Activated CD4-positive, alpha-beta T cell treated with anti-CD3 and anti-CD28 coated beads for 36 hours (primary cell): ENCODE measurements at regions of chr6 and their contacts with region 1.

Region 1: DNA sequence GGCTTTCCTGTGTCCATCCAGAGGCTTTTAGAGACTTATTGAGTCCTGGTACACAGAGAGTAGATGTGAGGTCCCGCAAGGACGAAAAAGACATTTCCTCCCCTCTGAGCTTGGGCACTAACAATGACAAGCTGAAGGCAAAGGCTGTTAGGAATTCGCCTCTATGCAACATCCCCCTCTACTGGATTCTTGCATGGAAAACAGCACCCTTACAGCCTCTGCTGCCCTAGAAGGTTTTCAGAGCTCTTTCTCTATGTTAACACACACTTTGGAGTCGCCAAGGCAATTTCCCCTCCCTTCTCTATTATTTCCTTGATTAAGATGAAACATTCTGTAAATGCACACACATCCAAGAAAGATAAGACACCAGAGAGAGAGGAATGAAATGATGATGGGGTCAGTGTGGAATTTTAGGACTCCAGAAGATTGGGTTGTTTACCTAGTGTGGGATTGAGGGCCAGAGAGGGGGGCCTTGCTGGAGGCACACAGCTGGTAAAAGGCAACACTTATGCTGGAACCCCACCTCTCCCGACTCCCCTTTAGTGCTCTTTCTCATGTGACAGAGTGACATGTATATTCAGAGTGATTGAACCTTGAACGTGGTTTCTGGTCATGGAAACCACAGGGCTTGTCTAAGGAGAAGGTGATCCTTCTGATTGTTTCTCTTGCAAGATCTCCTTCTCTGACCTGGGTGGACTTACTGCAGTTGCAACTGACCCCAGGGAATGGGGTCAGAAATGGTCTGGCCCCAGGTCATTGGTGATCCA is 300.7 kb downstream of the CLIC5 start:
- DNase-seq: peak; percentile 57
- ATAC-seq: peak; percentile 43
- H3K4me3 Mint-ChIP-seq: peak overlapping the region; percentile 24
- H3K27ac Mint-ChIP-seq: peak overlapping the region; percentile 89
- H3K4me1 Mint-ChIP-seq: peaks cover 48% of the 10 kb centered on the region
- H3K27me3 Mint-ChIP-seq: peaks cover 2% of the 10 kb centered on the region

Region 2: DNA sequence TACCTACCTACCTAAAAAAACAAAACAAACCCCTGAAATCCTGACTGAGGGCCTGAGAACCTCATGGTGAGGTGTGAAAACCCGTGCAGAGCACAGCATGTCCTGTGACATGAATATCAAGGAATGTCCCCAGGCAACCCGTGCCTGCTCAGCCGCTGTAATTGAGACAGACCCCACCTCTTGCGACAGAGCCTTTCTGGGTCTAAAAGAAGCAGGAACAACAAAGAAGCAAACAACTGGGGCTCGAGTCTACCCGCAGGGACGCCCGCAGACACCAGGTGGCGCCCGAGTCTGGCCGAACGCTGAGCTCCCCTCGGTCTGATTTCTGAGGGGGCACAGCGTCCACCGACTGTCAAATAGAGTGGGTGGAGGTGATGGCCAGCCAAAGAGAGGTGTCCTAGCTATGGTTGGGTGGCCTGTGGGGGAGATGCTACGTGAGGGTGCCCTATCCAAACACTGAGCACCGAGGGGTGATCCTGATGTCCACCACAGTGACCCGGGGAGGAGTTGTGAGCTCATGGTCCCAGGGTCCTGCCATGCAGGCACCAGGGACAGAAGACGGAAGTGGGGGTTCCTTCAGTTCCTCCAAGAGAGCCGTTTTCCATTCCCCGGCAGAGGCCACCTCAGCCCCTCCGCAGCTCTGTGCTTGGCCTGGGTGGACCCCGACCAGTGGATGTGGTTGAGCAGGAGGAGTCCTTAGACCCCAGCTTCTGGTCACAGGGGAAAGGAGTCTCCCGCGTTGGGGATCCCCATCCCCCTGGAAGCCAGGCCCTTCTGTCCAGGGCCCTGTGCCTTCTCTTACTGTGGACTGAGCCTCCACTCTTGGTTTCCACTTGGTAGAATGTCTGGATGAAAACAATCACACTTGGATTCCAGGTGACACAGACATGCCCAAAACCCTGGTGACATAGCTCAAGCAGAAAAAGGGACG is 1059.2 kb before region 1 on chr6:
- CTCF ChIA-PET with region 1: interaction called, 19 read pairs
- POLR2A ChIA-PET with region 1: no interaction called
- intact Hi-C with region 1: loop called (anchors 1 kb)
- DNase-seq: peak; percentile 85
- ATAC-seq: peak; percentile 77
- H3K4me3 Mint-ChIP-seq: no peak overlapping the region
- H3K27ac Mint-ChIP-seq: peak overlapping the region; percentile 75
- H3K4me1 Mint-ChIP-seq: peaks cover 13% of the 10 kb centered on the region
- H3K27me3 Mint-ChIP-seq: peaks cover 4% of the 10 kb centered on the region

Region 3: DNA sequence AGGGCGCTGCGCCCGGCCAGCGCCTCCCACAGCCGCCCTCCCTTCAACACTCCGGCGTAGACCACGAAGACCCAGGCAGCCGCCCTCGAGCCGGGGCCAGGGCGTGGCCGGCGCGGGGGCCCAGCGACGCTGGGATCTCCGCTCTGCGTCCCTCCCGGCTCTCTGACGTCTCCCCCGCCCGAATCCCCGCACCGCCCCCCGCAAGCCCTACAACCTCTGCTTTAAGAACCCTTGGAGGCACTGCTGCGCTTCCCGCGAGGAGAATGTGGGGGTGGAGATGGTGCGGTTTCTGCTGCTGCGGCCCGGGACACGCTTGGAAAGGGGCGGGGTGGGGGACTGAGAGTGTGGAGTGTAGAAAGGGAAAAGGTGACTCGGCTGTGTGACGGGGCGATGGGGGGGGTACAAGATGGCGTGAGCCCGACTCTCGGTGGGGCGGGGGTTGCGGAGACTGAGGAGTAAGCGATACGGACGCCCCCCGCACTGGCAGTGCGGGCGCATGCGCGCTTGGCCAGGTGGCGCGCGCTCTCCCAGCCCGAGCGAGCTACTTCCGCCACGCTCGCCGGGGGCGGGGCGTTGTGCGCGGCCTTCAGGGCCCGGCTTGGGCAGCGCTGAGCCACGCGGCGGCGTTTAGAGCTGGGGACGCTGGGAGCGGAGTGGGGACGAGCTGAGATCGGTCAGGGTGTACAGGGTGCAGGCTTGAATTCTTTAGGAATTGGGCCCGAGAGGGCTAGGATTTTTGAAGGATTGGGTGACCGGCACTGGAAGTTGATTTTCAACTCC is 337.2 kb before region 1 on chr6 and contains the start of gene SUPT3H:
- CTCF ChIA-PET with region 1: interaction called, 5 read pairs
- POLR2A ChIA-PET with region 1: interaction called, 3 read pairs
- intact Hi-C with region 1: loop called (anchors 1 kb)
- DNase-seq: peak; percentile 97
- ATAC-seq: peak; percentile 89
- H3K4me3 Mint-ChIP-seq: peak within 1 kb of the TSS; percentile 99
- H3K27ac Mint-ChIP-seq: peak within 1 kb of the TSS; percentile 100
- H3K4me1 Mint-ChIP-seq: peaks cover 22% of the 10 kb centered on the region
- H3K27me3 Mint-ChIP-seq: no peaks in the 10 kb centered on the region
- total RNA-seq, gene SUPT3H: 15.5 TPM

Region 4: DNA sequence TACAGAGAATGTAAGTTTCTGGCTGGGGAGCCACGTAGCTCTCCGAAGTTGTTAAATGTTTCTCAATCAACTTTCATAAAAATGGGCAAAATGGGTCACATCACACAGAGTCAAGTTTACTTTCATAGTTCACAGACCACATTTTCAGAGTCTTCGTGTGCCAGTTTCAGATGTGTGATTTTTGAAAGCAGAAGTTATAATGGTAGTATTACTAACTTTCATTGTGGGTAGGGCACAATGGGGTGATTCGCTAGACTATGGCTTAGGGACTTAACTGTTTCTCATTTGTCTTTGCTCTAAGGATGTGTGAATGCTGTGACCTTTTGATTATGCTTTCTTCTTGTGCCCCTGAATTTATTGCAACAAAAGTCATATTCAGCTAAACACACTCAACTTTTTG is 228.2 kb before region 1 on chr6:
- CTCF ChIA-PET with region 1: interaction called, 3 read pairs
- POLR2A ChIA-PET with region 1: no interaction called
- intact Hi-C with region 1: loop called (anchors 1 to 2 kb)
- DNase-seq: peak; percentile 50
- ATAC-seq: peak; percentile 94
- H3K4me3 Mint-ChIP-seq: no peak overlapping the region
- H3K27ac Mint-ChIP-seq: peak overlapping the region; percentile 58
- H3K4me1 Mint-ChIP-seq: peaks cover 53% of the 10 kb centered on the region
- H3K27me3 Mint-ChIP-seq: peaks cover 2% of the 10 kb centered on the region

Region 5: GRCh38 chr6:45626087-45626891 is 88.6 kb before region 1 on chr6:
- CTCF ChIA-PET with region 1: no interaction called
- POLR2A ChIA-PET with region 1: no interaction called
- intact Hi-C with region 1: loop called (anchors 1 kb)
- DNase-seq: peak; percentile 42
- ATAC-seq: peak; percentile 57
- H3K4me3 Mint-ChIP-seq: no peak overlapping the region
- H3K27ac Mint-ChIP-seq: peak overlapping the region; percentile 76
- H3K4me1 Mint-ChIP-seq: peaks cover 45% of the 10 kb centered on the region
- H3K27me3 Mint-ChIP-seq: no peaks in the 10 kb centered on the region

Region 6: GRCh38 chr6:45685076-45685475 is 29.8 kb before region 1 on chr6:
- CTCF ChIA-PET with region 1: no interaction called
- POLR2A ChIA-PET with region 1: no interaction called
- intact Hi-C with region 1: no loop called
- DNase-seq: no peak
- ATAC-seq: no peak
- H3K4me3 Mint-ChIP-seq: no peak overlapping the region
- H3K27ac Mint-ChIP-seq: no peak overlapping the region
- H3K4me1 Mint-ChIP-seq: peaks cover 10% of the 10 kb centered on the region
- H3K27me3 Mint-ChIP-seq: peaks cover 2% of the 10 kb centered on the region

Region 7: GRCh38 chr6:45822246-45822812 is 107.4 kb after region 1 on chr6:
- CTCF ChIA-PET with region 1: no interaction called
- POLR2A ChIA-PET with region 1: no interaction called
- intact Hi-C with region 1: loop called in 1 of 2 experiments (anchors 1 kb)
- DNase-seq: peak; percentile 59
- ATAC-seq: peak; percentile 87
- H3K4me3 Mint-ChIP-seq: peak overlapping the region; percentile 59
- H3K27ac Mint-ChIP-seq: peak overlapping the region; percentile 95
- H3K4me1 Mint-ChIP-seq: peaks cover 37% of the 10 kb centered on the region
- H3K27me3 Mint-ChIP-seq: peaks cover 5% of the 10 kb centered on the region

Region 8: GRCh38 chr6:45916692-45917091 is 201.8 kb after region 1 on chr6:
- CTCF ChIA-PET with region 1: no interaction called
- POLR2A ChIA-PET with region 1: no interaction called
- intact Hi-C with region 1: no loop called
- DNase-seq: no peak
- ATAC-seq: no peak
- H3K4me3 Mint-ChIP-seq: no peak overlapping the region
- H3K27ac Mint-ChIP-seq: no peak overlapping the region
- H3K4me1 Mint-ChIP-seq: peaks cover 18% of the 10 kb centered on the region
- H3K27me3 Mint-ChIP-seq: no peaks in the 10 kb centered on the region

Region 9: GRCh38 chr6:46042355-46042999 is 327.6 kb after region 1 on chr6:
- CTCF ChIA-PET with region 1: no interaction called
- POLR2A ChIA-PET with region 1: no interaction called
- intact Hi-C with region 1: no loop called
- DNase-seq: peak; percentile 18
- ATAC-seq: peak; percentile 80
- H3K4me3 Mint-ChIP-seq: no peak overlapping the region
- H3K27ac Mint-ChIP-seq: no peak overlapping the region
- H3K4me1 Mint-ChIP-seq: peaks cover 10% of the 10 kb centered on the region
- H3K27me3 Mint-ChIP-seq: no peaks in the 10 kb centered on the region